A673 (cell line): ENCODE measurements at regions of chr1 and their contacts with region 1.

Region 1: DNA sequence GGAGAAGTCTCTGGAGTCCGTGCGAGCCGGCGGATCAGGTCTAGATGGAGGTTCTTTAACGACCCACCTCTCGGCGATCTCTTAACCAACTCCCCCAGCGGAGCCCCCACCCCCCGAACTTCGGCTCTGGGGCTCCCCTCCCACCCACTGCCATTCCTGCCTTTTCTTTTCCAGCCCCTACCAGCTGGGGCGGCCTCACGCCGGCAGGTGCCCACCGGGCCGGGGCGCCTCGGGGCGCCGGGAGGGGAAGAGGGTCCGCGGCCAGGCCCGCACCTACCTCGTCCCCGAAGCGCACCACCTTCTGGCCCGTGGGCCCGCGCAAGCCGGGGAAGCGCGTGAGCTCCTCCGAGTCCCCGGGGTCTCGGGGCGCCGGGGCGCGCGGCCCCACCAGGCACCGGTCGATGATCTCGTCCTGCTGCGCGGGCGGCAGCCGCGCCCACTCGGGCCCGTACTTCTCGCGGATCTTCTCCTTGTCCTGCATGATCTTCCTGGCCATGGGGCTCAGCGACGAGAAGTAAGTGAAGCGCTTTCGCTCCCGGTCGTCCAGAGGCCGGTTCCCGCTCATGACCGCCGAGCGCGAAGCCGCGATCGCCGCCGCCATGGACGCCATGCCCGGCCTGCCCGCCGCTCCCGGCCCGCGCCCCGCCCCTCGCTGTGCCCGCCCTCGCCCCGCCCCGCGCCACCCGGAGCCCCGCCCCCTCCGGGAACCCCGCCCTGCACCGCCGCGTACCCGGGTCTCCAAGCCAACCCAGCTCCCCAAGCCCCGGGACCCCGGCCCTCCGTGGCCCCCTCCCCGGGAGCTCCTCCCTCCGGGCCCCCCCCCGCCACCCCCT is at the start of gene C1orf198:
- DNase-seq: peak; percentile 64
- H3K4me3 ChIP-seq: peak within 1 kb of the TSS; percentile 81
- H3K27ac ChIP-seq: peak within 1 kb of the TSS; percentile 82
- H3K4me1 ChIP-seq: peaks cover 30% of the 10 kb centered on the region
- H3K27me3 ChIP-seq: no peaks in the 10 kb centered on the region
- CTCF ChIP-seq: no peak
- total RNA-seq, gene C1orf198: 39.4 and 42.4 TPM in 2 replicates

Region 2: GRCh38 chr1:230758709-230759368 is 109.3 kb before region 1 on chr1:
- CTCF ChIA-PET with region 1: no interaction called
- POLR2A ChIA-PET with region 1: no interaction called
- intact Hi-C with region 1: no loop called
- DNase-seq: no peak
- H3K4me3 ChIP-seq: no peak overlapping the region
- H3K27ac ChIP-seq: no peak overlapping the region
- H3K4me1 ChIP-seq: no peaks in the 10 kb centered on the region
- H3K27me3 ChIP-seq: no peaks in the 10 kb centered on the region
- CTCF ChIP-seq: no peak

Region 3: GRCh38 chr1:230854423-230854822 is 13.7 kb before region 1 on chr1:
- CTCF ChIA-PET with region 1: interaction called, 15 read pairs
- POLR2A ChIA-PET with region 1: no interaction called
- intact Hi-C with region 1: no loop called
- DNase-seq: no peak
- H3K4me3 ChIP-seq: no peak overlapping the region
- H3K27ac ChIP-seq: no peak overlapping the region
- H3K4me1 ChIP-seq: peaks cover 10% of the 10 kb centered on the region
- H3K27me3 ChIP-seq: no peaks in the 10 kb centered on the region
- CTCF ChIP-seq: no peak

Region 4: GRCh38 chr1:231390071-231390470 is 522.0 kb after region 1 on chr1:
- CTCF ChIA-PET with region 1: no interaction called
- POLR2A ChIA-PET with region 1: no interaction called
- intact Hi-C with region 1: no loop called
- DNase-seq: no peak
- H3K4me3 ChIP-seq: no peak overlapping the region
- H3K27ac ChIP-seq: no peak overlapping the region
- H3K4me1 ChIP-seq: peaks cover 17% of the 10 kb centered on the region
- H3K27me3 ChIP-seq: no peaks in the 10 kb centered on the region
- CTCF ChIP-seq: no peak